Activated CD8-positive, alpha-beta T cell treated with anti-CD3 and anti-CD28 coated beads for 36 hours (primary cell): ENCODE measurements at regions of chr9 and their contacts with region 1.

Region 1: DNA sequence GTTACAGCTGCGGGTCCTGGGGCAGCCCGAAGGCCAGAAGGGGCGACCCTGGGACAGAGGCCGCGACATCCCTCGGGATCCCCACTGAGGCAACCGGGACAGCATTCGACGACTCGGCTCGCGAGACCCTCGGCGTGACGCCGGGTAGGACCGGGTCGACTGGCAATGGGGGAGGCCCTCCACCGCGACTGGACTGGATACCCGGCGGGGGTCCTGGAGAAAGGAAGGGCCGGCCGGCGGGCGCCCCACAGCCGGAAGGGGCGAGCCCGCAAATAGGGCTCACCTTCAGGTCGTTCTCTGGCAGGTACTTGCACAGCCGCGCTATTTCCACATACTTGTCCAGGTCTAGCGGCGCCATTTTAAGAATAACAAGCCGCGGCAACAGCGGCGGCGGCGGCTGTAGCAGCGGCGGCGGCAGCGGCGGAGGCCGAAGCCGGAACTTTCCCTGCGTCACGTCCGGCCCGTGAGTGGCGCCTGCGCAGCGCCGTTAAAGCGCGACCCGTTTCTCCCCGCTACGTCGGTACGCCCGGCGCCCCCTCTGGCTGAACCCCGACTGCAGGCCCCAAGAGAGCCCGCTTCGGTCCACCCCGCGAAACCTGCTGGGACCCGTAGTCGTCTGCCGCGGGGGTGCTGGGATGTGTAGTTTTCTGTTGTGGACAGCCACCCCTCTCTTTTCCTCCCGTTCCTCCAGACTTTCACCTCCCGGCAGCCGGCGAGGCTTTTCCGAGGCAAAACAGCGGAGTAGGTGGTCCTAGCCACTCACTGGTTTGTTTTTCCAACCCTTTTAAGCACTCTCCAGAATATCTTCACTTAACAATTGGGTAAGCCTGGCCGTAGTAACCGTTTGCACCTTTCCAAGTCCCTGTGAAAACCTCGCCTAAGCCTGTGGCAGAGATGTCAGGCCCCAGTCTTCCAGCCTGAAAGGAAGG is at the start of gene PPP6C:
- DNase-seq: peak; percentile 99
- ATAC-seq: peak; percentile 96
- H3K4me3 Mint-ChIP-seq: peak within 1 kb of the TSS; percentile 98
- H3K27ac Mint-ChIP-seq: peak within 1 kb of the TSS; percentile 98
- H3K4me1 Mint-ChIP-seq: peaks cover 54% of the 10 kb centered on the region
- H3K27me3 Mint-ChIP-seq: no peaks in the 10 kb centered on the region
- CTCF ChIP-seq: peak; percentile 75
- total RNA-seq, gene PPP6C: 43.1 to 44.8 TPM

Region 2: GRCh38 chr9:125126019-125126746 is 63.4 kb before region 1 on chr9:
- CTCF ChIA-PET with region 1: no interaction called
- POLR2A ChIA-PET with region 1: no interaction called
- intact Hi-C with region 1: no loop called
- DNase-seq: peak; percentile 92
- ATAC-seq: peak; percentile 96
- H3K4me3 Mint-ChIP-seq: peak overlapping the region; percentile 37
- H3K27ac Mint-ChIP-seq: peak overlapping the region; percentile 95
- H3K4me1 Mint-ChIP-seq: peaks cover 26% of the 10 kb centered on the region
- H3K27me3 Mint-ChIP-seq: no peaks in the 10 kb centered on the region
- CTCF ChIP-seq: no peak

Region 3: GRCh38 chr9:125200210-125201047 is 10.8 kb after region 1 on chr9 and contains the start of gene RABEPK:
- CTCF ChIA-PET with region 1: interaction called, 6 read pairs
- POLR2A ChIA-PET with region 1: interaction called, 18 read pairs
- intact Hi-C with region 1: no loop called
- DNase-seq: peak; percentile 92
- ATAC-seq: peak; percentile 98
- H3K4me3 Mint-ChIP-seq: peak within 1 kb of the TSS; percentile 97
- H3K27ac Mint-ChIP-seq: peak within 1 kb of the TSS; percentile 91
- H3K4me1 Mint-ChIP-seq: peaks cover 36% of the 10 kb centered on the region
- H3K27me3 Mint-ChIP-seq: no peaks in the 10 kb centered on the region
- CTCF ChIP-seq: no peak
- total RNA-seq, gene RABEPK: 30.0 to 30.4 TPM

Region 4: DNA sequence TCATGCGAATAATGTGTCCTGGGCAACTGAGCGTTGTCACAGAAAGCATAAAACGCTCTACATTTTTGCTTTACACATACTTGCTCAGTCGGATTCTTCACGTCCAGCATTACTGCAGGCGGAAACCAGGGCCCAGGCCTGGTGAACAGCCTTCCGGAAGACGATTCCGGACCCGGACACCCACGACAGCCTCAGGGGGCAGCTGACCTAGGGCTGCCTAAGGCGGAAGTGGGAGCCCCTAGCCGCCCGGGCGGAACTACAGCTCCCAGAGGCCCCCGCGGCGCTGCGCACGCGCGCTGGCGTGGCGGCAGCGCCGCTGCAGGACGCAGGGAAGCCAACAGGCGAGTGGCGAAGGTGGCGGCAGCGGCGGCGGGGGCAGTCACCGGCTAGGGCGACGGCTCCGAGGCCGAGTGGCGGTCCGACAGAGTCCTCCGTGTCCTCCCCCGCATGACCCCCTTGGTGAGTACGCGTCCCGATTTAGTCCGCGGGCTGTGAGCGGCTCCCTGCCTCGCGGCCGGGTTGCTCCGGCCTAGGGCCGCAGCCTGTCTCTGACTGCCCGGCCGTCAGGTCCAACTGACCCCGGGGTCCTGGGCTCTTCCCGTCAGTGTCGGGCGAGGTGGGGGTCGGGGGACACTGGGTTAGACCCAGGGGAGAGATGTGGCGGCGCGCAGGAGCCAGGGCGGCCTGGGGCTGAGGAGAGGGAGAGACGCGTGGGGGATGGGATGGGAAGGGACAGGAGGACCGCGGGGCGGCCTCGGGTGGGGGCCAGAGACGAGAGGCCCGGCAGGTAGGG is 72.1 kb after region 1 on chr9 and contains the start of gene GAPVD1:
- CTCF ChIA-PET with region 1: no interaction called
- POLR2A ChIA-PET with region 1: no interaction called
- intact Hi-C with region 1: no loop called
- DNase-seq: peak; percentile 91
- ATAC-seq: peak; percentile 97
- H3K4me3 Mint-ChIP-seq: peak within 1 kb of the TSS; percentile 100
- H3K27ac Mint-ChIP-seq: peak within 1 kb of the TSS; percentile 96
- H3K4me1 Mint-ChIP-seq: peaks cover 33% of the 10 kb centered on the region
- H3K27me3 Mint-ChIP-seq: no peaks in the 10 kb centered on the region
- CTCF ChIP-seq: peak; percentile 52
- total RNA-seq, gene GAPVD1: 49.7 to 49.8 TPM